Right ventricle myocardium inferior (tissue), 1 donor: ENCODE measurements at regions of chr10 and their contacts with region 1.

Region 1: DNA sequence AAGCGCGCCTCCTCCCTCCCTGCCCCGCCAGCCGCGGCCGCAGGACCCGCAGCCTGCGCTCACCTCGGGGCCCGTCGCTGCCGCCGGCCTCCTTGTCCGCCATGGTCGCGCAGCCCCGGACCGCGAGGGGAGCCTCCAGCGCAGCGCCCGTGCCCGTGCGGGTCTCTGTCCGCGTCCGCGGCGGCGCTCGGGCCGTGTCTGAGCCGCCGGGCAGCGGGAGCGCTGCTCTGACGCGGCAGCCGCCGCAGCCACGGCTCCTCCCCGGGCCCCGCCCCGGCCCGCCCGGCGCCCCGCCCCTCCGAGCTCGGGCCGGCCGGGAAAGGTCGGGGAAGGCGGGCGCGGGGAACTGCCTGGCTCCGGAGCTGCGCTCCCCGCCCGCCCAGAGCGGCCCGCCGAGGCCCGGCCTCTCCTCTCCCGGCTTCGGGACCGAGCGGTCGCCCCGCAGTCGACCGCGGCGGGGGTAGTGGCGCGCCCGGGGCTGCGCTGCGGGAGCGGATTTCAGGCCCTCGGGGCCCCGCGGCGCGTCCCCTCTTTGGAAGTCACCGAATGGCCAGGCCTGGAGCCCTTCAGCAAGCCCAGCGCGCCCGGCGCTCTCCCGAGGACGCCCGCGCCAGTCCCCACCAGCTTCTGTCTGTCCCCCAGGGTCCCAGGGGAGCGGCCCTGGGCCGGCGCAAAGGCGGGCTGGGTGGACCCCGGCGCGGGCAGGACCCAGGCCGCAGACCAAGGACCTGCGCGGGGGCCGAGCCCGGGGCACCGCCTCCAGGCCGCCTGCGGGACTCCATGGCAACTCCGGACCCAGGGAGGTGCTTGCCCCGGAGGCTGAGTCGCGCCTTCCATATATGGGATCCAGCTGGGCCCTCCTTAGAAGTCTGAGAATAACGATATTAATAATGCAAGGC is at the start of gene HSPA12A:
- DNase-seq: peak; percentile 87
- ATAC-seq: peak; percentile 93
- total RNA-seq, gene HSPA12A: 20.8 TPM

Region 2: GRCh38 chr10:116683821-116684220 is 58.8 kb before region 1 on chr10:
- intact Hi-C with region 1: loop called (anchors 2 kb)
- DNase-seq: peak; percentile 68
- ATAC-seq: no peak

Region 3: GRCh38 chr10:116690356-116691322 is 52.0 kb before region 1 on chr10:
- intact Hi-C with region 1: loop called (anchors 5 kb)
- DNase-seq: peak; percentile 74
- ATAC-seq: peak; percentile 60

Region 4: GRCh38 chr10:116756277-116756676 is 13.7 kb after region 1 on chr10:
- intact Hi-C with region 1: loop called (anchors 2 kb)
- DNase-seq: no peak
- ATAC-seq: peak; percentile 80